ENCODE measurements at regions of chr1 and their contacts with region 1.

Region 1: DNA sequence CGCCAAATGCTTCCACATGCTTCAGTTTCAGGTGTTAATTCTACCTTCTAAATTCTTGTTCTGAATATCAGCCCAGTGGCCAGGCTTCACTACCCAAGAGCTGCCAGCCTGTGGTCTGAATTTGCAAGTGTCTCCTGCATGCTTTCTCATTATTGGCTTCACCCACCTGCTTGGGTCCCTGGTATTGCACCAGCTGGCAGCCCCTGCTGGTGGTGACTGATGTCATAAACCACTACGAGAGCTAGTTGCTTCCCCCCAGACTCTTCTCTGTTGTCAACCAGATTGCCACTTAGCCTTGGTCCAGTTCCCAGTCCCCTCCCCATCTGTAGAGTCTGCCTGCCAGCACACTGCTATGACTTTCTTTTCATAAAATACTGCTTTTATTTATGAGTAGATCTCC is 197.7 kb upstream of the DUSP10 start:
- DNase-seq: peak; percentile 85
- ATAC-seq: peak; percentile 95
- H3K4me3 ChIP-seq: no peak overlapping the region
- H3K4me3 Mint-ChIP-seq: peak overlapping the region; percentile 29
- H3K27ac ChIP-seq: peak overlapping the region in 1 of 2 donors; percentile 27
- H3K27ac Mint-ChIP-seq: peak overlapping the region; percentile 76
- H3K4me1 ChIP-seq: peaks cover 22 to 27% of the 10 kb centered on the region in 2 donors
- H3K4me1 Mint-ChIP-seq: peaks cover 38% of the 10 kb centered on the region
- H3K27me3 ChIP-seq: no peaks in the 10 kb centered on the region
- H3K27me3 Mint-ChIP-seq: no peaks in the 10 kb centered on the region
- CTCF ChIP-seq: peak; percentile 38

Region 2: DNA sequence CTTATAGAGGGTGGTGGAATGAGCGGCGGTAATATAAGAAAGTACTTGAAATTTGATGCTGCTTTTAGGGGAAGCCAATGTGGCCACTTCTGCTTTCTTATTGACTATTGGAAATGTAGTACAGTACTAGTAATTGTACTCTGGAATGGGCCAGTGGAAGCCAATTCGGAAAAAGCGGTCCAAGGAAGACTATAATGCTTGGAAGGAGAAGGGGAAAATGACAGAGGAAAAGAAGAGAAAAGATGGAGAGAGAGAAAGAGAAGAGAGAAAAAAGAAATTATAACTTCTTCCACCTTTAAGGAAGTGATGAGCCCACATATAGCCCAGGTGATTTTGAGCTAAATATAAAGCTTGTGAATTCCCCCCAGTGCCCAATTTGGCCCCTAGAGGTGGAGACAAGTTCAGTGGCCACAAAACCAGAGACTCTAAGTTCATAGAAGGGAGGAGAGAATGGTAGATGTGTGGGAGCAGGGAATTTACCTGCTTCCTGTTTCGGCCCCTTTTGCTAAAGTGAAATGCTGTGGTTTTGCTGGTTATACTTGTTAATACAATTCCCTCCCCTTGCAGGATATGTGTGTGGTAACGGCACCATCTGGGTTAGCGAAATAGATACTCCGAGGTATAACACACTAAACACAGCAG is 162.1 kb before region 1 on chr1:
- CTCF ChIA-PET with region 1: no interaction called
- POLR2A ChIA-PET with region 1: no interaction called
- intact Hi-C with region 1: no loop called
- DNase-seq: peak; percentile 91
- ATAC-seq: peak; percentile 62
- H3K4me3 ChIP-seq: peak overlapping the region in 4 of 5 experiments; percentile 3 to 49 (median 26)
- H3K4me3 Mint-ChIP-seq: peak overlapping the region; percentile 79
- H3K27ac ChIP-seq: peak overlapping the region; percentile 80 to 88
- H3K27ac Mint-ChIP-seq: peak overlapping the region; percentile 91
- H3K4me1 ChIP-seq: peaks cover 54 to 64% of the 10 kb centered on the region in 2 donors
- H3K4me1 Mint-ChIP-seq: peaks cover 65% of the 10 kb centered on the region
- H3K27me3 ChIP-seq: no peaks in the 10 kb centered on the region
- H3K27me3 Mint-ChIP-seq: no peaks in the 10 kb centered on the region
- CTCF ChIP-seq: no peak

Region 3: DNA sequence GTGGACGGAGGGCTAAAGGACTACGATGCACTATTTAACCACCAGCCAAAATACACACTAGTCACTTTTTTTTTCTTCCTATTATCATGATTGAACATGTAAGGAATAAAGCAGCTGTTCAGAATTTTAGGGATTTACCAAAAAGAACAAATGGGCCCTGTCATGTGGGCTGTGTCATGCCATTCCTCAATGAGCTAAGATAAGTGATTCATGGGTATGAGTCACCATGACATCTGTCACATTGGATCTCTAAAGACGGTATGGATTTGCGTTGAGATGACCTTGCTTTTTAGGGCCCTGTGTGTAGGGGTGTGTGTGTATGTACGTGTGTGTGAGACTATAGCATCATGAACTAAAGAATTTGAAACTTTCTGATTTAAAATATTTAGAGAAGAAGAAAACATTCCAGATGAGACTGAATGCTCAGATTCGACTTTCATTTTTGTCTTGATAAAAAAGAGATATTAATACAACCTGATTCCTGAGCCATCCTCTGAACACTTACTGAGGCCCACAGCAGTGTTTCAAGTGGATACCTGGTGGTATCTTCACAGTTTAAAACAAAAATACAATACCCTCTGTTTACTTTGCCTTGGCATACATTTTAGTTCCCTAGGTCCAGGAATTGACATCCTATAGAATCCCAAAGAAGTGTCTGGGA is 48.4 kb after region 1 on chr1:
- CTCF ChIA-PET with region 1: no interaction called
- POLR2A ChIA-PET with region 1: no interaction called
- intact Hi-C with region 1: loop called (anchors 10 kb)
- DNase-seq: no peak
- ATAC-seq: no peak
- H3K4me3 ChIP-seq: no peak overlapping the region
- H3K4me3 Mint-ChIP-seq: no peak overlapping the region
- H3K27ac ChIP-seq: no peak overlapping the region
- H3K27ac Mint-ChIP-seq: no peak overlapping the region
- H3K4me1 ChIP-seq: peaks cover 0 to 7% of the 10 kb centered on the region in 2 donors
- H3K4me1 Mint-ChIP-seq: peaks cover 5% of the 10 kb centered on the region
- H3K27me3 ChIP-seq: no peaks in the 10 kb centered on the region
- H3K27me3 Mint-ChIP-seq: peaks cover 7% of the 10 kb centered on the region
- CTCF ChIP-seq: no peak

Measured in B cell (primary cell).